ENCODE measurements at regions of chr7 and their contacts with region 1.

Region 1: DNA sequence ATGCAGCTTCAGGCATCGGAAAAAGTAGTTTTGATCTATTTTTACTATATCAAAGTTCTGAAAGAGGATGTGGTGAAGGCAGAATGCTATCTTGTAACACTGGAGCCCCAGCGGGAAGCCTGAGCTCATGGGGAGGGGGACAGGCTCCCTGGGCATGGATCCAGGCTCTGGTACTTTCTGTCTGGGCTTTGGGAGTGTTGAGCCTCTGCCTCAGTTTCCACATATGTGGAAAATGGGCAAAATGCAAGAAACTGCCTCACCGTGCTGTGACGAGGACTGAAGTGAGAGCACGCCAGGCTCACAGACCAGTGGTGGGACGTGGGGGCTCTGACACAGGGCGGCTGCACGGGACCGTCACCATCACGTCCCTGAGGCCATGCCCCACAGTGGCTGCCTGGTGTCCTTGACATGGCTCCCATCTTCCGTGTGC is 182.9 kb upstream of the SHH start:
- DNase-seq: peak in 5 of 9 donors; percentile 34 to 49 (median 43)
- ATAC-seq: no peak
- H3K4me3 ChIP-seq: no peak overlapping the region
- H3K4me3 Mint-ChIP-seq: peak overlapping the region in 9 of 10 donors; percentile 61 to 99 (median 77)
- H3K27ac ChIP-seq: no peak overlapping the region
- H3K27ac Mint-ChIP-seq: peak overlapping the region in 4 of 9 donors; percentile 32 to 79 (median 68)
- H3K4me1 ChIP-seq: peaks cover 0 to 54% of the 10 kb centered on the region in 2 donors
- H3K4me1 Mint-ChIP-seq: peaks cover 27 to 75% (median 64%) of the 10 kb centered on the region in 7 donors
- H3K27me3 ChIP-seq: no peaks in the 10 kb centered on the region
- H3K27me3 Mint-ChIP-seq: peaks cover 0 to 47% (median 13%) of the 10 kb centered on the region in 5 donors

Region 2: DNA sequence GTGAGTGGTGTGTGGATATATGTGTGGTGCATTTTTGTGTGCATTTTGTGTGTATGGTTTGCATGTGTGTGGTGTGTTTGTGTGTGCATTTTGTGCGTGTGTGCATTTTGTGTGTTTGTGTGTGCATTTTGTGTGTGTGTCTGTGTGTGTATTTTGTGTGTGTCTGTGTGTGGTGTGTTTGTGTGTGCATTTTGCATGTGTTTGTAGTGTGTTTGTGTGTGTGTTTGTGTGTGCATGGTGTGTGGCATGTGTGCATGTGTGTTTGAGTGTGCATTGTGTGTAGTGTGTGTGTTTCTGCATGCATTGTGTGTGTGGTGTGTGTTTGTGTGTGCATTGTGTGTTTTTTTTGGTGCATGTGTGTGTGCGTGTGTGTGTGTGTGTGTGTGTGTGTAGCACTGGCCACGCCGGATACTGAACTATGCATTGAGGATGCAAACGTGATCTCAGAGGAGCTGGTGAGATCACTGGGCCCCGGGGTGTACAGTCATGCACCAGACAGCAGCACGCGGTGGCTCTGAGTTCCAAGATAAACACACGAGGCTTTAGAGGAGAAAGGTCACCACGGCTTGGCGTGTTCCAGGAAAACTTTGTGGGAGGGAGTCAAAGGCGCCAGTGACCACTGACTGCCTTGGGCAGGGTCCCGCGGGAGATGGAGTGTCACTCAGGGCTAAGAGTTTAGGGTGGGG is 76.3 kb before region 1 on chr7:
- CTCF ChIA-PET with region 1: no interaction called
- POLR2A ChIA-PET with region 1: no interaction called
- intact Hi-C with region 1: no loop called
- DNase-seq: no peak
- ATAC-seq: no peak
- H3K4me3 ChIP-seq: no peak overlapping the region
- H3K4me3 Mint-ChIP-seq: no peak overlapping the region
- H3K27ac ChIP-seq: no peak overlapping the region
- H3K27ac Mint-ChIP-seq: peak overlapping the region in 1 of 9 donors; percentile 60
- H3K4me1 ChIP-seq: no peaks in the 10 kb centered on the region
- H3K4me1 Mint-ChIP-seq: no peaks in the 10 kb centered on the region
- H3K27me3 ChIP-seq: no peaks in the 10 kb centered on the region
- H3K27me3 Mint-ChIP-seq: peaks cover 0 to 11% (median 5%) of the 10 kb centered on the region in 5 donors

Region 3: DNA sequence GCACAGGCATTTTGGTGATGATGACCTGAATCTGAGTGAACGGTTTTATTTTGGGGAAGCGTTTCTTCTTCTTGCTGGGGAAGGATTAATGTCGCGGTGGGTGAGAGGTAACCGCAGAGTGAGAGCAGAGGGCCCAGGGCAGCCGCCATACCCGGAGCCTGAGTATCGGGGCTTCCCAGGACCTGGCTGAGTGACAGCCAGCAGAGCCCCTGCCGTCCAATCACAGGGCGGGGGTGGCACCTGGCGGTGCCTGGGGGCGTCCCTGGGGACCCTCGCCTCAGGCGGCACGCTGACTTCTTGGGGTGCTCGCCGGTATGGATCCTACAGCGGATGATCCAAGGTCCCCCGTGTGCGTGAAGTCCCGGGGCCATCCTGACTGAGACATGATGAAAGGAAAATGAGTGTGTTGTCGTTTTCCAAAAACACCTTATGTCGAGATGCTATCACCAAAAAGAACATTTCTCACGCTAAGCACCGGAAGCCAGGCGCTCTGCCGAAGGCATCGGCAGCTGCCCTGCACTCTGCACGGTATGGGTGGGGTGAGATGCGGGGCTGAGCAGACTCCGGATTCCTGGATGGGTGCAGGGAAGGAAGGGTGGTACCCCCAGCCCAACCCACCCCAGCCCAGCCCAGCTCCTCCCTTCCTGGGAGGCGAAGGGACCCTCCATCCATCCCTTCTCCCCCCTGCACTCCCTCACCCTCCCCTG is 44.9 kb after region 1 on chr7:
- CTCF ChIA-PET with region 1: no interaction called
- POLR2A ChIA-PET with region 1: no interaction called
- intact Hi-C with region 1: loop called in 1 of 2 experiments (anchors 5 kb)
- DNase-seq: peak in 2 of 9 donors; percentile 15 to 36
- ATAC-seq: peak; percentile 52
- H3K4me3 ChIP-seq: no peak overlapping the region
- H3K4me3 Mint-ChIP-seq: peak overlapping the region in 5 of 10 donors; percentile 38 to 77 (median 57)
- H3K27ac ChIP-seq: no peak overlapping the region
- H3K27ac Mint-ChIP-seq: no peak overlapping the region
- H3K4me1 ChIP-seq: no peaks in the 10 kb centered on the region
- H3K4me1 Mint-ChIP-seq: no peaks in the 10 kb centered on the region
- H3K27me3 ChIP-seq: no peaks in the 10 kb centered on the region
- H3K27me3 Mint-ChIP-seq: no peaks in the 10 kb centered on the region

Region 4: GRCh38 chr7:156050636-156051578 is 55.7 kb after region 1 on chr7:
- CTCF ChIA-PET with region 1: no interaction called
- POLR2A ChIA-PET with region 1: no interaction called
- intact Hi-C with region 1: no loop called
- DNase-seq: no peak
- ATAC-seq: no peak
- H3K4me3 ChIP-seq: no peak overlapping the region
- H3K4me3 Mint-ChIP-seq: no peak overlapping the region
- H3K27ac ChIP-seq: no peak overlapping the region
- H3K27ac Mint-ChIP-seq: no peak overlapping the region
- H3K4me1 ChIP-seq: no peaks in the 10 kb centered on the region
- H3K4me1 Mint-ChIP-seq: peaks cover 0 to 4% (median 0%) of the 10 kb centered on the region in 7 donors
- H3K27me3 ChIP-seq: no peaks in the 10 kb centered on the region
- H3K27me3 Mint-ChIP-seq: peaks cover 0 to 6% (median 0%) of the 10 kb centered on the region in 5 donors

Region 5: GRCh38 chr7:156096771-156097538 is 101.8 kb after region 1 on chr7:
- CTCF ChIA-PET with region 1: no interaction called
- POLR2A ChIA-PET with region 1: no interaction called
- intact Hi-C with region 1: loop called in 1 of 2 experiments (anchors 1 kb)
- DNase-seq: peak in 5 of 9 donors; percentile 11 to 37 (median 22)
- ATAC-seq: peak; percentile 31
- H3K4me3 ChIP-seq: no peak overlapping the region
- H3K4me3 Mint-ChIP-seq: peak overlapping the region in 9 of 10 donors; percentile 5 to 79 (median 66)
- H3K27ac ChIP-seq: no peak overlapping the region
- H3K27ac Mint-ChIP-seq: peak overlapping the region in 8 of 9 donors; percentile 63 to 89 (median 80)
- H3K4me1 ChIP-seq: peaks cover 0 to 26% of the 10 kb centered on the region in 2 donors
- H3K4me1 Mint-ChIP-seq: peaks cover 0 to 34% (median 22%) of the 10 kb centered on the region in 7 donors
- H3K27me3 ChIP-seq: no peaks in the 10 kb centered on the region
- H3K27me3 Mint-ChIP-seq: peaks cover 0 to 4% (median 0%) of the 10 kb centered on the region in 5 donors